ENCODE measurements at regions of chr2 and their contacts with region 1.

Region 1: DNA sequence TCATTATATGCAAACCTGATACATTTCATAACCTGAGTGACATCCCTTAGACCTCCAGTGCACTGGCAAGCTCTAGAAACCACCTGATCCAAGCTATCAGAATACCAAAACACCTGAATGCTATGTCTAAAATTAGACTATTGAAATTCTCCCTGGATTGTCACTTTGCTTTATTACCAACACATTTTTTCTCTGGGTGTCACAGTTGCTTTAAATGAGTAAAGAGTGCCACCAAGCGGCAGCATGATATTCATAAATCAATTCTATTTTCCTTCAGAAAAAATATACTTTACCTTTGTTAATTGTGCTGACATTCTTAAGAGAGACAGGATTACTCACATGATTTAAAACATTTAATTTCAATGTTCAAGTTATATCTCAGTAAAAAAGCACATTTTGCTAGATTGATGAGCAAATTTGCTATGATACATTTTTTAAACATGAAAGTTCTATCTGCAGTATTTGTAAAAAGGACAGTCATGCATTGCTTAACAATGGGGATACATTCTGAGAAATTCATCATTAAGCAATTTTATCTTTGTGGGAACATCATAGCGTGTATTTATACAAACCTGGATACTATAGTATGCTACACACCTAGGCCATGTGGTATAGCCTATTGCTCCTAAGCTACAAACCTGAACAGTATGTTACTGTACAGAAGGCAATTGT is 338.4 kb upstream of the SLC39A10 start:
- DNase-seq: peak; percentile 54
- H3K4me3 ChIP-seq: no peak overlapping the region
- H3K27ac ChIP-seq: no peak overlapping the region
- H3K4me1 ChIP-seq: no peaks in the 10 kb centered on the region
- H3K27me3 ChIP-seq: no peaks in the 10 kb centered on the region
- CTCF ChIP-seq: peak; percentile 43

Region 2: GRCh38 chr2:194166818-194167217 is 1151.8 kb before region 1 on chr2:
- intact Hi-C with region 1: loop called (anchors 5 kb)
- DNase-seq: no peak
- H3K4me3 ChIP-seq: no peak overlapping the region
- H3K27ac ChIP-seq: no peak overlapping the region
- H3K4me1 ChIP-seq: no peaks in the 10 kb centered on the region
- H3K27me3 ChIP-seq: no peaks in the 10 kb centered on the region
- CTCF ChIP-seq: peak; percentile 38

Region 3: DNA sequence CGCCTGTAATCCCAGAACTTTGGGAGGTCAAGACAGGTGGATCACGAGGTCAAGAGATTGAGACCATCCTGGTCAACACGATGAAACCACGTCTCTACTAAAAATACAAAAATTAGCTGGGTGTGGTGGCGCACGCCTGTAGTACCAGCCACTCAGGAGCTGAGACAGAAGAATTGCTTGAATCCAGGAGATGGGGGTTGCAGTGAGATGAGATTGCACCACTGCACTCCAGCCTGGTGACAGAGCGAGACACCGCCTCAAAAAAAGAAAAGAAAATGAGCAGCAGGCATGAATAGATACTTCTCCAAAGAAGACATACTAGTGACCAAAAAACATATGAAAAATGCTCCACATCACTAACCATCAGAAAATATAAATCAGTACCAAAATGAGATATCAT is 611.5 kb after region 1 on chr2:
- intact Hi-C with region 1: loop called (anchors 10 kb)
- DNase-seq: no peak
- H3K4me3 ChIP-seq: no peak overlapping the region
- H3K27ac ChIP-seq: no peak overlapping the region
- H3K4me1 ChIP-seq: no peaks in the 10 kb centered on the region
- H3K27me3 ChIP-seq: no peaks in the 10 kb centered on the region
- CTCF ChIP-seq: no peak